ENCODE measurements at regions of chr1 and their contacts with region 1.

Region 1: DNA sequence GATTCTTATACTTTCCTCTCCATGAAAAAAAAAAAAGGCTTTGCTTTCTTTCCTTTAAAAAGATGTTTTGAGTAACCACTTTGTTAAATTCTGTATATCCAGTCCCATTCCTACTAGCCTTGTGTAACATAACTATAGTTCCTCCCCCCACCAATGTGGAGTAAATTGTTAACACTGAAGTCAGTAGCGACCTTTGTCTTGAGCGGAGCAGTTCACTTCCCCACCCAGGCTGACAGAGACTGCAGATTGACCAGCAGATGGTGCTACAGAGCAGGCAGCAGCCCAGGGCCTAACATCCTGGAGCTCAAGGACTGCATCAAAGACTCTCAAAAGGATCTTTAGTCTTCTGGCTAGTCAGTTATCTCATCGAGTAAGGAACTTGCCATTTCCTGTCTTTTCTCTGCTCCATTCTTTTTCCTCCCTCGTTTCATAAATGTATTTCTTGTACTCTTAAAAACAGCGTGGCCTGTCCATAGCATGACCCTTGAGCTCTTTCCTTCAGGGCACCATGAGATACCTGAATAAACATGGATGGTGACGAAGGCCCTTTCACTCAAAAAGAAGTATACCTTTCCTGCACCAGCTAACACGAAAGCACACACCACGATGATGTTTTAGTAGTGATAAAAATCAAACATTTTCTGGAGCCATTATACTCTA is 503.5 kb upstream of the PKN2 start:
- DNase-seq: peak; percentile 89
- ATAC-seq: peak; percentile 90
- H3K4me3 ChIP-seq: no peak overlapping the region; a peak in 1 of 6 replicates
- H3K27ac ChIP-seq: peak overlapping the region; percentile 15
- H3K4me1 ChIP-seq: peaks cover 55% of the 10 kb centered on the region
- H3K27me3 ChIP-seq: no peaks in the 10 kb centered on the region
- CTCF ChIP-seq: peak; percentile 95
- EP300 ChIP-seq: peak in 1 of 2 experiments; percentile 66; a peak in 2 of 4 replicates
- POLR2A ChIP-seq: no peak
- RAD21 ChIP-seq: peak; percentile 87

Region 2: GRCh38 chr1:87765681-87766070 is 414.9 kb before region 1 on chr1:
- CTCF ChIA-PET with region 1: no interaction called
- POLR2A ChIA-PET with region 1: no interaction called
- in situ Hi-C with region 1: no loop called
- intact Hi-C with region 1: no loop called
- DNase-seq: no peak
- ATAC-seq: no peak
- H3K4me3 ChIP-seq: no peak overlapping the region
- H3K27ac ChIP-seq: no peak overlapping the region
- H3K4me1 ChIP-seq: no peaks in the 10 kb centered on the region
- H3K27me3 ChIP-seq: no peaks in the 10 kb centered on the region
- CTCF ChIP-seq: no peak
- EP300 ChIP-seq: no peak
- POLR2A ChIP-seq: no peak
- RAD21 ChIP-seq: no peak

Region 3: GRCh38 chr1:88061492-88062177 is 118.9 kb before region 1 on chr1:
- CTCF ChIA-PET with region 1: no interaction called
- POLR2A ChIA-PET with region 1: no interaction called
- in situ Hi-C with region 1: no loop called
- intact Hi-C with region 1: loop called (anchors 1 kb)
- DNase-seq: peak; percentile 45
- ATAC-seq: peak; percentile 95
- H3K4me3 ChIP-seq: no peak overlapping the region
- H3K27ac ChIP-seq: no peak overlapping the region
- H3K4me1 ChIP-seq: no peaks in the 10 kb centered on the region
- H3K27me3 ChIP-seq: no peaks in the 10 kb centered on the region
- CTCF ChIP-seq: peak; percentile 64
- EP300 ChIP-seq: no peak
- POLR2A ChIP-seq: no peak
- RAD21 ChIP-seq: 0 out of 2 replicates have a peak, but pooled peaks have one; percentile 33

Region 4: GRCh38 chr1:88111806-88112205 is 68.8 kb before region 1 on chr1:
- CTCF ChIA-PET with region 1: no interaction called
- POLR2A ChIA-PET with region 1: no interaction called
- in situ Hi-C with region 1: no loop called
- intact Hi-C with region 1: loop called (anchors 10 kb)
- DNase-seq: peak; percentile 12
- ATAC-seq: no peak
- H3K4me3 ChIP-seq: no peak overlapping the region
- H3K27ac ChIP-seq: no peak overlapping the region
- H3K4me1 ChIP-seq: peaks cover 18% of the 10 kb centered on the region
- H3K27me3 ChIP-seq: no peaks in the 10 kb centered on the region
- CTCF ChIP-seq: no peak
- EP300 ChIP-seq: no peak
- POLR2A ChIP-seq: no peak
- RAD21 ChIP-seq: no peak

Region 5: GRCh38 chr1:88549536-88549935 is 369.0 kb after region 1 on chr1:
- CTCF ChIA-PET with region 1: no interaction called
- POLR2A ChIA-PET with region 1: no interaction called
- in situ Hi-C with region 1: no loop called
- intact Hi-C with region 1: loop called (anchors 1 kb)
- DNase-seq: no peak
- ATAC-seq: no peak
- H3K4me3 ChIP-seq: no peak overlapping the region
- H3K27ac ChIP-seq: no peak overlapping the region
- H3K4me1 ChIP-seq: no peaks in the 10 kb centered on the region
- H3K27me3 ChIP-seq: no peaks in the 10 kb centered on the region
- CTCF ChIP-seq: no peak
- EP300 ChIP-seq: no peak
- POLR2A ChIP-seq: no peak
- RAD21 ChIP-seq: no peak